K562 (cell line): ENCODE measurements at regions of chr7 and their contacts with region 1.

Region 1: GRCh38 chr7:73701357-73701995 is 18.0 kb downstream of the STX1A start:
- DNase-seq: peak; percentile 77 to 85 (median 81)
- ATAC-seq: peak; percentile 82
- H3K4me3 ChIP-seq: no peak overlapping the region
- H3K27ac ChIP-seq: no peak overlapping the region
- H3K4me1 ChIP-seq: peaks cover 15 to 60% of the 10 kb centered on the region in 2 experiments; a peak in 4 of 5 replicates
- H3K27me3 ChIP-seq: no peaks in the 10 kb centered on the region; a peak in 1 of 5 replicates
- CTCF ChIP-seq: peak; percentile 83 to 94 (median 85)
- EP300 ChIP-seq: no peak
- POLR2A ChIP-seq: no peak
- RAD21 ChIP-seq: peak; percentile 22 to 49; a peak in 3 of 4 replicates

Region 2: GRCh38 chr7:73690646-73691045 is 10.8 kb before region 1 on chr7:
- CTCF ChIA-PET with region 1: interaction called, 3 read pairs
- POLR2A ChIA-PET with region 1: interaction called, 10 read pairs
- in situ Hi-C with region 1: no loop called
- intact Hi-C with region 1: no loop called
- DNase-seq: no peak
- ATAC-seq: no peak
- H3K4me3 ChIP-seq: no peak overlapping the region
- H3K27ac ChIP-seq: no peak overlapping the region
- H3K4me1 ChIP-seq: peaks cover 0 to 3% of the 10 kb centered on the region in 2 experiments; a peak in 1 of 5 replicates
- H3K27me3 ChIP-seq: no peaks in the 10 kb centered on the region; a peak in 1 of 5 replicates
- CTCF ChIP-seq: no peak
- EP300 ChIP-seq: no peak
- POLR2A ChIP-seq: no peak
- RAD21 ChIP-seq: no peak